ENCODE measurements at regions of chr3 and their contacts with region 1.

Region 1: GRCh38 chr3:149273096-149273751 is 51.6 kb upstream of the CP start:
- DNase-seq: peak in 1 of 3 donors; percentile 59
- ATAC-seq: peak; percentile 84
- H3K4me3 ChIP-seq: no peak overlapping the region
- H3K4me1 ChIP-seq: no peaks in the 10 kb centered on the region
- CTCF ChIP-seq: peak; percentile 75

Region 2: DNA sequence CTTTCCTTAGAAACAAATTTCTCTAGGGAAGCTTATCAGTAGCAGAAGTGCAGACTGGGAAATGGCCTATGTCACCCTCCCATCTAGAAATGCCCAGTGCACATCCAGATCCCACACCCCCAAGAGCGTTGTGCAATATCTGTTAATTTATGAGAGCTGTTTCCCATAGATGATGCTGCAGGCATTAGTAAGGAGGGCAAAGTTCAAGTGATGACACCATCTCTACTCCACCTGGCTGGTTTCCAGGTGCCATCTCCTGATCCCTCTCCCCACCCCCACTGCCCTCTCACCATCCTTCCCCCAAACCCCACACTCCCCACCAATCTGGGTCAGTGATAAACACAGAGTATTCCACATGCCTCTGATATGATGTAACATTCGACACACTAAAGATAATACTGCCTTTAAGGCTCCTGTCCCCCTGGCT is 536.1 kb before region 1 on chr3:
- intact Hi-C with region 1: loop called in 1 of 2 experiments (anchors 10 kb)
- DNase-seq: no peak
- ATAC-seq: no peak
- H3K4me3 ChIP-seq: no peak overlapping the region
- H3K4me1 ChIP-seq: no peaks in the 10 kb centered on the region
- CTCF ChIP-seq: no peak

Region 3: GRCh38 chr3:148955544-148956346 is 317.5 kb before region 1 on chr3:
- intact Hi-C with region 1: loop called (anchors 5 kb)
- DNase-seq: peak in 1 of 3 donors; percentile 81
- ATAC-seq: peak; percentile 60
- H3K4me3 ChIP-seq: no peak overlapping the region
- H3K4me1 ChIP-seq: no peaks in the 10 kb centered on the region
- CTCF ChIP-seq: no peak

Region 4: GRCh38 chr3:149120051-149120972 is 152.9 kb before region 1 on chr3:
- intact Hi-C with region 1: loop called (anchors 2 to 5 kb)
- DNase-seq: peak in 1 of 3 donors; percentile 45
- ATAC-seq: peak; percentile 70
- H3K4me3 ChIP-seq: no peak overlapping the region
- H3K4me1 ChIP-seq: no peaks in the 10 kb centered on the region
- CTCF ChIP-seq: no peak